ENCODE measurements at regions of chr2 and their contacts with region 1.

Region 1: GRCh38 chr2:222797261-222797660 is 63.6 kb upstream of the ACSL3 start:
- DNase-seq: no peak
- ATAC-seq: peak in 1 of 4 donors; percentile 14
- H3K4me3 ChIP-seq: no peak overlapping the region
- H3K27ac ChIP-seq: peak overlapping the region in 2 of 3 donors; percentile 16 to 79
- H3K4me1 ChIP-seq: peaks cover 0 to 33% (median 16%) of the 10 kb centered on the region in 4 donors
- H3K27me3 ChIP-seq: no peaks in the 10 kb centered on the region
- CTCF ChIP-seq: peak; percentile 28 to 42 (median 38)
- POLR2A ChIP-seq: no peak

Region 2: DNA sequence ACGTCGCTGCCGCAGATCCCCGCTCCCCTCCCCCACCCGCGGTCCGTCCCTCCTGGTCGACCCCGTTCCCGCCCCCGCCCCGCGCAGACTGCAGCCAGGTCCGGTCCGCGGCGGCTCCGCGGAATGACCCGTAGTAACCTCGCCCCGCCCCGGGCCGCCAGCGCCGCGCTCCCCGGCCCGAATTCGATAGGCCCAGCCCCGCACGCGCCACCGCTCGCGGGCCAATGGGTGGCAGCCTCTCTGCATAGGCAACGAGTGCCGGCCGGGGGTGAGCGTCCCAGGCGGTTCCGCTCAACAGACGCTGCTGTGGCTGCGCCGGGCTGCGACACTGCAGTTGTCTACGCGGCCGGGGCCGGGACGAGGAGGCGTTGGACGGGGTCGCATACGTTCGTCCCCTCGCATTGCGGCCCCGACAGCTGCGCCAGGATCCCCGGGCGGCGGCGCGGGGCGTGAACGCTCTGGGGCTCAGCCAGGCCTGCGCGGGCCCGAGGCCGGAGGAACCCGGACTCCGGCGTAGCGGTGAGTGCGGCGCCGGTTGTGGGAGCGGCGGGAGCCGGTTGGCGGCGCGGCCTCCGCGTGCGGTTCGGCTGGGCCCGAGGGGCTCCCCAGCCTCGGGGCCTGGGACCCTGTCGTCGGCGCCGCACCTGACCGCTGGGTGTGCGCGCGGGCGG is 63.6 kb after region 1 on chr2 and contains the start of gene ACSL3:
- intact Hi-C with region 1: loop called in 1 of 2 experiments (anchors 10 kb)
- DNase-seq: peak; percentile 99
- ATAC-seq: peak; percentile 91 to 99 (median 94)
- H3K4me3 ChIP-seq: peak within 1 kb of the TSS; percentile 87 to 92 (median 89)
- H3K27ac ChIP-seq: peak within 1 kb of the TSS; percentile 91 to 98 (median 94)
- H3K4me1 ChIP-seq: peaks cover 0 to 48% (median 14%) of the 10 kb centered on the region in 4 donors
- H3K27me3 ChIP-seq: no peaks in the 10 kb centered on the region
- CTCF ChIP-seq: peak in 2 of 4 donors; percentile 16 to 33
- POLR2A ChIP-seq: peak; percentile 100
- total RNA-seq, gene ACSL3: 31.1 to 73.0 (median 49.9) TPM

Measured in right lobe of liver (tissue), 6 donors.